AG04449 (cell line): ENCODE measurements at regions of chr22 and their contacts with region 1.

Region 1: DNA sequence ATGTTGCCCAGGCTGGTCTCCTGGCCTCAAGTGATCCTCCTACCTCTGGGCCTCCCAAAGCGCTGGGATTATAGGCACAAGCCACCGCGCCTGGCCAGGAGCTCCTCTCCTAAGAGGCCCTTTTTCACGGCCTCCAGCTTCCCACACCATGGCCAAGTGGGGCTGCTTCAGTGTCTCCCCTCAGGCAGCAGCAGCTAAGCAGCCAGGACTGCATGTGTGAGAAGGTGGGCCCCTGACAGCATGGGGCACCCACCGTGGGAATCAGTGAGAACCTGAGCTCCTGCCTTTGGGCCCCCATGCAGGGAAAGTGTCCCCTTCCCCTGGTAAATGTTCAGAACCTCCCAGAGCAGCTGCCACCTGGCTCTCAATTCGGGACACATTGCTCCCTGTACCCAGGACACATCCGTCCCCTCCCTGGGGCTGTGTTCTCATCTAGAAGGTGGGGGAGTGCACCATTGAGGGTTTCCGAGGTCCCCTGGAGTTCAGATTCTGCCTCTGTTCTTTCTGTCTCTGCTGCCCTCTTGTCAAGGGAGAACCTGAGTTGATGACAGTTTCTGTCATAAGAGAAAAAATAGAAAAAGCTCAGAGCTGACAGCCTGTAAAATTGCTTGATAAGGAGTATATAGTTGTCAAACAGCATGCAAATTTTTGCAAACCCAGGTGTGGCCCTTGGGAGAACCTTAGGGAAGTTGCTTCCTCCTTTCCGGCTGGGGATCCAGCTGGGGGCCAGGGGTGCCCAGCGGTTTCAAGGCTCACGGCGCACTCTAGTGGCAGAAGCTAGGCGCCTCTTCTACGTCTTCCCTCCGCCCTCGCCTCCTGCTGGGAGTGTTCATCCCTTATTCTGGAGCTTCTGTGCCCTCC is 29.7 kb downstream of the FAM83F start:
- DNase-seq: no peak
- H3K4me3 ChIP-seq: no peak overlapping the region
- CTCF ChIP-seq: peak; percentile 96

Region 2: GRCh38 chr22:39559454-39560105 is 464.9 kb before region 1 on chr22:
- CTCF ChIA-PET with region 1: interaction called, 39 read pairs
- POLR2A ChIA-PET with region 1: no interaction called
- DNase-seq: no peak
- H3K4me3 ChIP-seq: no peak overlapping the region
- CTCF ChIP-seq: peak; percentile 41

Region 3: GRCh38 chr22:39808081-39808480 is 216.3 kb before region 1 on chr22:
- CTCF ChIA-PET with region 1: no interaction called
- POLR2A ChIA-PET with region 1: no interaction called
- DNase-seq: no peak
- H3K4me3 ChIP-seq: no peak overlapping the region
- CTCF ChIP-seq: peak; percentile 32

Region 4: DNA sequence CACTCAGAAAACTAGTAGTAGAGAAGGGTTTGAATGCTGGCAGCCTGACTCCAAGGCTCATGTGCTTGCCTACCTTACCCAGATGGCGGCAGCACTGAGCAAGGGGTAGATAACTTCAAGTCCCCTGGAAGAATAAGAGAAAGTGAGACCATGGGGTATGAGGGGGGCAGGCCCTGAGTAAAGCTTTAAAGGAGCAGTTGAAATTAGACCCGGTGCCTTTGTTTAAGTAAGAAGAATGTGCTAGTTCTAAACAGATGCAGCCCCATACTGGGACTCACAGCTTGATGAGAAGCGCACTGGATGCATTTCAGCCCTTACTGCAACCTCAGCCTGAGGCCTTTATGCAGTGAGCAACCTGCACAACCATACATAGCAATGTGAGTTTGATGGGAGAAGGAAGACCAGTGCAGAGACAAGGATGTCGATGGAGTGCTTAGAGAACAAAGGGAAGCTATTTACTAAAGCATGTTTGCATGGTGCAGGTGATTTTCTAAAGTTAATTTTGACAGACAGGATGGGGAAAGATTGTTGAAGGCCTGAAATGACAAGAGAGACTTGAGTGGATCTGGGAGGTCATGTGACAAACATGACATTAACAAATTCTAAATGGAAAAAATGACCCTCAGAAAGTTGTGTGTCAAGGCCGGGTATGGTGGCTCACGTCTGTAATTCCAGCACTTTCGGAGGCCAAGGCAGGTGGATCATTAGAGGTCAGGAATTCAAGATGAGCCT is 91.3 kb before region 1 on chr22:
- CTCF ChIA-PET with region 1: interaction called, 23 read pairs
- POLR2A ChIA-PET with region 1: no interaction called
- DNase-seq: no peak
- H3K4me3 ChIP-seq: no peak overlapping the region
- CTCF ChIP-seq: peak; percentile 46

Region 5: GRCh38 chr22:40009292-40009769 is 15.1 kb before region 1 on chr22:
- CTCF ChIA-PET with region 1: interaction called, 27 read pairs
- POLR2A ChIA-PET with region 1: no interaction called
- DNase-seq: no peak
- H3K4me3 ChIP-seq: no peak overlapping the region
- CTCF ChIP-seq: no peak

Region 6: GRCh38 chr22:40044102-40044869 is 19.9 kb after region 1 on chr22:
- CTCF ChIA-PET with region 1: interaction called, 136 read pairs
- POLR2A ChIA-PET with region 1: no interaction called
- DNase-seq: peak; percentile 96
- H3K4me3 ChIP-seq: peak overlapping the region; percentile 95
- CTCF ChIP-seq: no peak

Region 7: GRCh38 chr22:40058265-40058664 is 33.8 kb after region 1 on chr22:
- CTCF ChIA-PET with region 1: no interaction called
- POLR2A ChIA-PET with region 1: no interaction called
- DNase-seq: no peak
- H3K4me3 ChIP-seq: no peak overlapping the region
- CTCF ChIP-seq: no peak

Region 8: GRCh38 chr22:40147388-40148176 is 123.2 kb after region 1 on chr22:
- CTCF ChIA-PET with region 1: no interaction called
- POLR2A ChIA-PET with region 1: no interaction called
- DNase-seq: no peak
- H3K4me3 ChIP-seq: no peak overlapping the region
- CTCF ChIP-seq: no peak